Tibial artery (tissue), 4 donors: ENCODE measurements at regions of chr19 and their contacts with region 1.

Region 1: DNA sequence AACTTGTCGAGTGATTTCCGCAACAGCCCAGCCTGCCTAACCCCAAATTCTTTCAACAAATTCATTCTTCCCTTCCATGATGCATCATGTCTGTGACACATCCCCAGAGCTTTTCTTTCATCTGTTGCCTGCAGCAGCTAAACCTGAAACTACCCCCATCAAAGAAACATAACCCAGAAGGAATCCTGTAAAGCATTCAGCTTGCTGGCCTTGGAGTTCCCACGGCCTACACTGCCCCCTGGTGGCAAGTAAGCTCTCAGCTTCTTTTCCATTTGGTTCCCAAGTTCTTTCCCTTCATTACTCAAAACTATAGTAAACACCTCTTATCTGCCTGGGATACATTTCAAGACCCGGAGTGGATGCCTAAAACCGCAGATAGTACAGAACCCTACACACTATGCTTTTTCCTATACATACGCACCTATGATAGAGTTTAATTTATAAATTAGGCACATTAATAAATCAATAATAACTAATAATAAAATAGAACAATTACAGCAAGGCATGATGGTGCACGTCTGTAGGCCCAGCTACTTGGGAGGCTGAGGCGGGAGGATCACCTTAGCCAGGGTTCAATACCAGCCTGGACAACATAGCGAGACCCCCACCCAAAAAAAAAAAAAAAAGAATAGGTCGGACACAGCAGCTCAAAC is 7.4 kb downstream of the ETHE1 start:
- DNase-seq: peak; percentile 64 to 77
- H3K4me3 ChIP-seq: no peak overlapping the region
- H3K27ac ChIP-seq: no peak overlapping the region
- H3K4me1 ChIP-seq: peaks cover 0 to 2% (median 1%) of the 10 kb centered on the region in 4 donors
- H3K27me3 ChIP-seq: no peaks in the 10 kb centered on the region
- CTCF ChIP-seq: peak; percentile 81 to 89

Region 2: DNA sequence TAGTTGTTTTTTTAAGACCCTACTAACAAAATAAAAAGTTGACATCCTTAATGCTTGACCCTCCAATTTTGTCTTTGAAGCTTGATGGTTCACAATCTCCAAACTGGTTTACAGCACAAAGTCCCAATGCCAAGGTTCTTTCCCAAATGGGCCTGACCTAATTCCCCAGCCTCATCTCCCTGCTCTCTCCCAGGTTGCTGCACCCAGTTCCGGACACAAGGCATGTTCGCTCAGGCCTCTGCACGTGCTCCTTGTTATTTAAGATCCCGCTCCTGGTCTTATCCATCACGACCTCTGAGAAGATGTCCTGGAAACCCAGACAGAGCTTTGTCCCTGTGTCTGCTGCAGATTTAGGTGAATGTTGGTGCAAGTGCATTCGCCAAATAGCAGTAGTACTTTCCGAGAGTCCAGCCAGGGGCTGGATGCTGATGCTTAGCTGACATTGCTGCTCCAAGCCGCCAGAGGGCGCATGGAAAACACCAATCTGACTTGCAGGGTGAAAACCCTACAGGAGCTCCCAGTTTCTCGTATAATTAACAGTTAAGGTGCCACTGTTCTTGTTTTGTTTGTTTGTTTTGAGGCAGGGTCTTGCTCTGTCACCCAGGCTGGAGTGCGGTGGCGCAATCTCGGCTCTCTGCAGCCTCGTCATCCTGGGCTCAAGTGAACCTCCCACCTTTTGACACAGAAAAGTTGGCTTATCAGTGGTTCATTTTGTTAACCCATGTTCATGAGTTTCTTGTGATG is 72.6 kb before region 1 on chr19:
- intact Hi-C with region 1: loop called (anchors 2 kb)
- DNase-seq: peak; percentile 69 to 84
- H3K4me3 ChIP-seq: no peak overlapping the region
- H3K27ac ChIP-seq: no peak overlapping the region
- H3K4me1 ChIP-seq: no peaks in the 10 kb centered on the region
- H3K27me3 ChIP-seq: no peaks in the 10 kb centered on the region
- CTCF ChIP-seq: peak; percentile 95 to 96